ENCODE measurements at regions of chr5 and their contacts with region 1.

Region 1: DNA sequence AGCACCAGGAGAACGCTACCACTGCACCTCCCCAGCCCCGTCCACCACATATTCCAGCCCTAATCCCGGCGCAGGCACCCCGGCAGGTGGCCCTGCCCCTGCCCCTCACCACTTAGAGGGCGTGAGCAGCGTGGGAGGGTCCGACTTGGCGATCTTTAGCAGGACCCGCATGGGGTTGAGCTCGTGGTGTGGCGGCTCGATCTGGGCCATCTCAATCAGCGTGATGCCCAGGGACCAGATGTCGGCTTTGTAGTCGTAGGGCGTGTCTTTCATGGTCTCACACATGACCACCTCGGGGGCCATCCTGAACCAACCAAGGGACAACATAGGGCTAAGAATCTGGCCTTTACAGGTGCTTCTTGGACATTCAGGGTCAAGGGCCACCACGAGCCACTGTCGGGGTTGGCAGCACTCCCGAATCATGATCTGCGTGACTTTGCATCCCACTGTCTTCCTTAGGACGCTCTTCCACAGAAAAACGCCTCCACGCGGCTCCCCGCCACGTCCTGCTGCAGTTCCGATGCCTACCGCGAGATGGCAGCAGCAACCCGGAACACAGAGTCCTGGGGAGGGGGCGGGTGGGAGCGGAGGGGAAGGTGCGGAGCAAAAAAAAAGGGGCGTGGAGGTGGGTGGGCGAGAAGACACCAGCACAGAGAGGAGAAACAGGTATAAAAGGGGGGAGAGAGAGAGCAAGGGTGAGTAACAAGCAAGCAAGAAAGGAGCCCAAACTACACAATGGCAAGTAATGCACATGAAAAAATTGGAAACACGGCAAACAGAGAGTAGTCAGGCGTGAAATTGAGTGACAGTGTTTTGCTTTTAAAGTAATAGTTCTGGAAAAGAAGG is 81.3 kb downstream of the STK10 start:
- DNase-seq: peak in 1 of 2 experiments; percentile 96
- H3K4me3 ChIP-seq: peak overlapping the region in 1 of 4 experiments; percentile 34; a peak in 1 of 8 replicates
- H3K27ac ChIP-seq: no peak overlapping the region
- H3K4me1 ChIP-seq: peaks cover 0 to 38% (median 20%) of the 10 kb centered on the region in 4 experiments; a peak in 6 of 7 replicates
- H3K27me3 ChIP-seq: no peaks in the 10 kb centered on the region
- CTCF ChIP-seq: peak in 2 of 3 experiments; percentile 84 to 85; a peak in 3 of 4 replicates
- EP300 ChIP-seq: no peak
- POLR2A ChIP-seq: no peak
- RAD21 ChIP-seq: peak; percentile 89 to 91

Region 2: DNA sequence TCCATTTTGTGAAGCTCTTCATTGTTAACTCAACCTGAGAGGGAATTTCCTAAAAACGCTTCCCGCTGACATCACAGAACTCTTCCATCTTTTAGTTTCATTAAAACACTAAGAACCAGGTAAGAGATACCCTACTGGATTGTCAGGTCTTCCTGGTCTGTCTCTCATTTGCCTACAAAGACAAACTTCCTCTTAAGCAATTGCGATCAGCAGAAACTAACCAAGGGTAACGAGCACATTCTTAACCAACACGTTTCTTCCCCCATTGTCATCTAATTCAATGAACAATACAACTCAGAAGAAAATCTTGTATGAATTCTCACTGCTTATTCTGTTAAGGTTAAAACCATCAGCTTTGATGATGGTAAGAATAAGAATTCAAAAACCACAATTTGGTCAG is 106.9 kb before region 1 on chr5:
- CTCF ChIA-PET with region 1: no interaction called
- POLR2A ChIA-PET with region 1: no interaction called
- DNase-seq: no peak
- H3K4me3 ChIP-seq: peak overlapping the region in 1 of 4 experiments; percentile 24; a peak in 1 of 8 replicates
- H3K27ac ChIP-seq: no peak overlapping the region
- H3K4me1 ChIP-seq: peaks cover 5 to 40% (median 27%) of the 10 kb centered on the region in 4 experiments; a peak in 5 of 7 replicates
- H3K27me3 ChIP-seq: no peaks in the 10 kb centered on the region
- CTCF ChIP-seq: no peak
- EP300 ChIP-seq: no peak
- POLR2A ChIP-seq: no peak
- RAD21 ChIP-seq: no peak

Region 3: GRCh38 chr5:172117977-172118701 is 11.4 kb after region 1 on chr5:
- CTCF ChIA-PET with region 1: interaction called, 14 read pairs
- POLR2A ChIA-PET with region 1: no interaction called
- DNase-seq: no peak
- H3K4me3 ChIP-seq: no peak overlapping the region
- H3K27ac ChIP-seq: no peak overlapping the region
- H3K4me1 ChIP-seq: no peaks in the 10 kb centered on the region; a peak in 1 of 7 replicates
- H3K27me3 ChIP-seq: no peaks in the 10 kb centered on the region; a peak in 1 of 7 replicates
- CTCF ChIP-seq: no peak
- EP300 ChIP-seq: no peak
- POLR2A ChIP-seq: no peak
- RAD21 ChIP-seq: no peak

Region 4: DNA sequence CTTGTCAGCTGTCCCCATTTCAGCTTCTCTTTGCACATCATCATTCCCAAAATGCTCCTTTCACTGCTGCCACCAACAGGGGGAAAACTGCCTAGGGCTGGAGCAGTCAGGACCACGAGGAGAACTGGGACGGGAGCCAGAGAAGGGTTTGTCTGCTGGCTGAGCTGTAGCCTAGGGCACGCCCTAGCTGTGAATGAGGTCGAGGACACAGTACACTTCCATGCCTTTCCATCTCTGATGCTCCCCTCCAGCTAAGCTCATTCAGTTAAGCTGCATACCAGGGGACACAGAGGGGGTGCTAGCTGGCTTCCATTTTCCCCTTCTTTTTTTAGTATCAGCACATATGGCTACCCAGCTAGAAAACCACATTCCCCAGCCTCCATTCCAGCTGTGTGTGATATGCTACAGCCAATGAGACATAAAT is 16.5 kb after region 1 on chr5:
- CTCF ChIA-PET with region 1: interaction called, 14 read pairs
- POLR2A ChIA-PET with region 1: no interaction called
- DNase-seq: no peak
- H3K4me3 ChIP-seq: no peak overlapping the region
- H3K27ac ChIP-seq: no peak overlapping the region
- H3K4me1 ChIP-seq: no peaks in the 10 kb centered on the region; a peak in 1 of 7 replicates
- H3K27me3 ChIP-seq: no peaks in the 10 kb centered on the region
- CTCF ChIP-seq: peak; percentile 17 to 45 (median 22)
- EP300 ChIP-seq: no peak
- POLR2A ChIP-seq: no peak
- RAD21 ChIP-seq: peak in 1 of 2 experiments; percentile 26; a peak in 1 of 4 replicates

Region 5: GRCh38 chr5:172179361-172179989 is 72.7 kb after region 1 on chr5:
- CTCF ChIA-PET with region 1: interaction called, 16 read pairs
- POLR2A ChIA-PET with region 1: no interaction called
- DNase-seq: no peak
- H3K4me3 ChIP-seq: no peak overlapping the region
- H3K27ac ChIP-seq: no peak overlapping the region
- H3K4me1 ChIP-seq: peaks cover 0 to 20% (median 6%) of the 10 kb centered on the region in 4 experiments; a peak in 4 of 7 replicates
- H3K27me3 ChIP-seq: no peaks in the 10 kb centered on the region
- CTCF ChIP-seq: no peak
- EP300 ChIP-seq: no peak
- POLR2A ChIP-seq: no peak
- RAD21 ChIP-seq: no peak

Region 6: DNA sequence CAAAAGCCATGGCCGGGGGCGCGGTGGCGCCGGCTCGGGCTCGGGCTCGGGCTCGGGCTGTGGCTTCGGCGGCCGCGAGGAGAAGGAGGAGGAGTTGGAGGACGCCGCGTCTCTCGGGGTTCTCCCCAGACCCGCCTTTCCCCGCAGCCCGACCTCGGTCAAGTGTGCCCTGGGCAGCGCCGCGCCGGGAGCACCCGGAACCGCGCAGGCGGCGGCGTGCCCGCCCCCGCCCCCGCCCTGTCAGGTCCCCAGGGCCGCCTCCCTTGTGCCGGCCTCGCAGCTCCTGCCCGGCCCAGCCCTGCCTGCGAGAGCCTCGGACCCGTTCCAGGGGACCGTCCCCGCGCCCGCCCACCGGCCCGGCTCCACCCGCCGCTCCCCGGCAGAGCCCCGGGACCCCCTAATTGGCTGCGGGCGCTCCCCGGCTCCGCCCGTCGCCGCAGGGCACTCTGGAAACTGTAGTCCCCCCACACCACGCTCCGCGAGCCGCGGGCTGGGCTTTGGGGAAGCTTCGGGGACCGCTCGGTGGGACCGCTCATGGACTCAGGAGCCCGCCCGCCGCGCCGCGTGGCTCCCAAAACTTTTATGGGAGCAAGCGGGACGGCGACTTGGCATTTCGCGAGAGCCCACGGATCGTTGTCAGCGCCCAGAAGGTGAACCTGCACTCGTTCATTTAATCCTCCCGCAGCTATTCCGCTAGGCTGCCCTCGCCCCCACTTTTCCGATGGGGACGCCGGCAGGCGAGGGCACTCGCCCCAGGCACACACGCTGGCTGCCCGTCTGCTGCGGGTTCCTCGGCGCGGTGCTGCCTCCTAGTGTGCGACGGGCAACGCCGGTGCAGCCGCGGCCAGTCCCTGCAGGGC is 81.5 kb after region 1 on chr5 and contains the start of gene STK10:
- CTCF ChIA-PET with region 1: interaction called, 15 read pairs
- POLR2A ChIA-PET with region 1: interaction called, 4 read pairs
- DNase-seq: peak in 1 of 2 experiments; percentile 93
- H3K4me3 ChIP-seq: peak within 1 kb of the TSS; percentile 61 to 84 (median 79)
- H3K27ac ChIP-seq: no peak within 1 kb of the TSS
- H3K4me1 ChIP-seq: peaks cover 0 to 4% (median 1%) of the 10 kb centered on the region in 4 experiments; a peak in 3 of 7 replicates
- H3K27me3 ChIP-seq: no peaks in the 10 kb centered on the region; a peak in 1 of 7 replicates
- CTCF ChIP-seq: peak; percentile 86 to 94 (median 86)
- EP300 ChIP-seq: peak in 1 of 2 experiments; percentile 91; a peak in 1 of 3 replicates
- POLR2A ChIP-seq: no peak; a peak in 1 of 3 replicates
- RAD21 ChIP-seq: peak; percentile 89 to 91
- total RNA-seq, gene STK10: 20.8 and 21.4 TPM in 2 replicates

Region 7: GRCh38 chr5:172293054-172293744 is 186.5 kb after region 1 on chr5:
- CTCF ChIA-PET with region 1: interaction called, 10 read pairs
- POLR2A ChIA-PET with region 1: no interaction called
- DNase-seq: peak; percentile 27 to 58
- H3K4me3 ChIP-seq: no peak overlapping the region
- H3K27ac ChIP-seq: no peak overlapping the region
- H3K4me1 ChIP-seq: peaks cover 0 to 4% (median 0%) of the 10 kb centered on the region in 4 experiments; a peak in 1 of 7 replicates
- H3K27me3 ChIP-seq: no peaks in the 10 kb centered on the region
- CTCF ChIP-seq: peak; percentile 59 to 90 (median 78)
- EP300 ChIP-seq: no peak
- POLR2A ChIP-seq: no peak
- RAD21 ChIP-seq: peak; percentile 86 to 93